Activated CD4-positive, alpha-beta memory T cell treated with anti-CD3 and anti-CD28 coated beads, Interleukin-2, amount 10 ng/mL, durations not matched to agents 7 days and 5 days (primary cell): ENCODE measurements at regions of chr14 and their contacts with region 1.

Region 1: GRCh38 chr14:63770187-63770807 is 42.4 kb upstream of the SGPP1 start:
- DNase-seq: peak; percentile 60
- H3K4me3 Mint-ChIP-seq: no peak overlapping the region
- H3K27ac Mint-ChIP-seq: no peak overlapping the region
- H3K4me1 Mint-ChIP-seq: peaks cover 8% of the 10 kb centered on the region
- H3K27me3 Mint-ChIP-seq: no peaks in the 10 kb centered on the region

Region 2: GRCh38 chr14:63632932-63633514 is 137.3 kb before region 1 on chr14:
- CTCF ChIA-PET with region 1: interaction called, 25 read pairs
- POLR2A ChIA-PET with region 1: interaction called, 3 read pairs
- DNase-seq: no peak
- H3K4me3 Mint-ChIP-seq: no peak overlapping the region
- H3K27ac Mint-ChIP-seq: no peak overlapping the region
- H3K4me1 Mint-ChIP-seq: peaks cover 24% of the 10 kb centered on the region
- H3K27me3 Mint-ChIP-seq: no peaks in the 10 kb centered on the region

Region 3: DNA sequence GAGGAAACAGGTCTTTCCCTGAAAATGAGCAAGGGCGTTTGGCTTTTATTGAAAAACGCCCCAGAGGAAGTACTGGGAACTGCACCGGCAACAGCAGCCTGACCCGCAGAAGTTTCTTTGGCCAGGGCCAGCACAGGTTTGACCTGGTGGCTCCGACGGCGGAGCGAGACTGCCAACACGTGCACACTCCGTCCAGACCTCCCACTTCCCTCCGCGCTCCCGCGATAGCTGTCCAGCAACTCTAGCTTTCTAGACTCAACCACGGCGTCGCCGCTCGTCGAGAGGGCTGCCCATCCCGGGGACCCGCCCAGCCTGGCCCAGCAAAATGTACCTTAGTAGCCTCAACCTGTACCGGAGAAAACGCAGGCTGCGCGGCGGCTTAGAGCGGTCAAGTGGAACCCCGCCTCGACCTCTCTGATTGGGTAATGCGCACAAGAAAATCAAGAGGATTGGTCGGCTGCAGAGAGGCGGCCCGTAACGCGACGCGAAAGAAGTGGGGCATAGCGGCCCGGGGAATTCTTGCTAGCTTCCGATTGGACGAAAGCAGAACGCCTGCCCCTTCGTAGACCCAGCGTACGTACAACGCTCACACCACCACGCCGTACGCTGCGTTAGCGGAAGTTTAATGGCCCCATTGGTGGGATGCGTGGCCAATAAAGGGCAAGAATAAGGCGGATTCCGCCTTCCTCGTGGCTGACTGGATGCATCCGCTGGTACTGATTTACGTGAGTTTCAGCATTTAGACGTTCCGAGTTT is 128.6 kb before region 1 on chr14 and contains the start of gene WDR89:
- CTCF ChIA-PET with region 1: interaction called, 20 read pairs
- POLR2A ChIA-PET with region 1: interaction called, 5 read pairs
- DNase-seq: peak; percentile 98
- H3K4me3 Mint-ChIP-seq: peak within 1 kb of the TSS; percentile 80
- H3K27ac Mint-ChIP-seq: peak within 1 kb of the TSS; percentile 89
- H3K4me1 Mint-ChIP-seq: peaks cover 38% of the 10 kb centered on the region
- H3K27me3 Mint-ChIP-seq: no peaks in the 10 kb centered on the region
- total RNA-seq, gene WDR89: 20.1 to 21.9 TPM

Region 4: GRCh38 chr14:63713058-63713457 is 57.2 kb before region 1 on chr14:
- CTCF ChIA-PET with region 1: interaction called, 10 read pairs
- POLR2A ChIA-PET with region 1: no interaction called
- DNase-seq: no peak
- H3K4me3 Mint-ChIP-seq: no peak overlapping the region
- H3K27ac Mint-ChIP-seq: peak overlapping the region; percentile 0
- H3K4me1 Mint-ChIP-seq: peaks cover 19% of the 10 kb centered on the region
- H3K27me3 Mint-ChIP-seq: no peaks in the 10 kb centered on the region

Region 5: DNA sequence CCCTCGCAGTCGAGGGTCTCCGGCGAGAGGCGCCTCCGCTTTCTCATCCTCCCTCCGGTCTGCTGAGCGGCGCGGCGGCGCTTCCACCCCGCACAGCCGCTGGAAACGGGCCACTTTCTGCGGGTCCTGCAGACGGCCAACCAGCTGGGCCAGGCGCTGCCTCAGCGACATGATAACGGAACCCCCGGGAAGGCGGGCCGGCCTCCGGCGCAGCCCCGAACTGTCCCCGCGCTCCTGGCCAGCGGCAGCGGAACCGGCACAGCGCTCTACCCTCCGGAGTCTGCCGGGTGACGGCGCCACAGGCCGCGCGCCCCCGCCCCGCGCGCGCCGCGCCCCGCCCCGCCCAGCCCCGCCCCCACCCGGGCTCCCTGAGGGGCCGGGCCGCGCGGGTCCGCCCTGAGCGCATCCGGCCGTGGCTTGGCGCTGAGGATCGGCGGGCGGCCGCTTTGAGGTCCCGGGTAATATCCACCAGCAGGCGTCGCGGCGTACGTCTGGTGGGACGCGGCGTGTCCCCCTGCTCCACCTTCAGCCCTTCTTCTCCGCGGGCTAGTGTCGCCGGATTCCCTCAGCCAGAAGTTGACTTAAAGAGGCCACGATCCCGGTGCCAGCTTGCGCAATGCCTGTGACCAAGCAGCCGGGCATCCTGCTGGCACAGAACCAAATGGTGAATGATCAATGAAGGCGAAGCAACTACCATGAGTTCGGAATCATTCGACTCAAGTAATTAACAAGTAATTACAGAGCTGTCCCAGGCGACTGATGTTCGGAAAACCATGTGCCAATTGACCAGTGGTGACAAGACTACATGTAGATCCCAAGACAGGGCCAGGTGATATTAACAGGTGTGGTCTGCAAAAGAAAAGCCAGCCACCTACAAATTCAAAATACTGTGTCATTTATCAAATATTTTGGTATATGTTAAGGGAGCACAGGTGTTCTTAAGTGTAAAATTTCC is 42.2 kb before region 1 on chr14 and contains the start of gene SGPP1:
- CTCF ChIA-PET with region 1: interaction called, 23 read pairs
- POLR2A ChIA-PET with region 1: interaction called, 7 read pairs
- DNase-seq: peak; percentile 88
- H3K4me3 Mint-ChIP-seq: peak within 1 kb of the TSS; percentile 99
- H3K27ac Mint-ChIP-seq: peak within 1 kb of the TSS; percentile 94
- H3K4me1 Mint-ChIP-seq: peaks cover 33% of the 10 kb centered on the region
- H3K27me3 Mint-ChIP-seq: peaks cover 10% of the 10 kb centered on the region
- total RNA-seq, gene SGPP1: 19.3 to 20.6 TPM

Region 6: DNA sequence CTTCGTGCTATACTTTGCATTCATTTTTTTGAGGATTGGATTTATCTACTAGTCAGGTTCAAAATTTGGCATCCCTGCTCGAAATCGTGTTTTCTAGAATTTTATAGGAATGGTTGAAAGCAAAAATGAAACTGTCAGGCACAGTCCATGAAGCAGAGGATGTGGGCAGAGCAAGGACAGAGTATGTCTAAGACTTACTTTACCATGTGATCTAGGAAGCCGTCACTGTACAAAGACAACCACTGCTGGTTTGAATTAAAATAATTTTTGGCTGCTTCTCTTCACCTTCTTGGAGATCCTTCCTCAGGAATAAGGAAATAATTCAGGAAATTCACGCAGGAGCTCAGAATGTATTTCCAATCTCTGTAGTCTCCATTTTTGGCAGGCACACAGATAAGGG is 10.8 kb before region 1 on chr14:
- CTCF ChIA-PET with region 1: interaction called, 12 read pairs
- POLR2A ChIA-PET with region 1: no interaction called
- DNase-seq: peak; percentile 43
- H3K4me3 Mint-ChIP-seq: peak overlapping the region; percentile 65
- H3K27ac Mint-ChIP-seq: peak overlapping the region; percentile 88
- H3K4me1 Mint-ChIP-seq: peaks cover 18% of the 10 kb centered on the region
- H3K27me3 Mint-ChIP-seq: no peaks in the 10 kb centered on the region

Region 7: DNA sequence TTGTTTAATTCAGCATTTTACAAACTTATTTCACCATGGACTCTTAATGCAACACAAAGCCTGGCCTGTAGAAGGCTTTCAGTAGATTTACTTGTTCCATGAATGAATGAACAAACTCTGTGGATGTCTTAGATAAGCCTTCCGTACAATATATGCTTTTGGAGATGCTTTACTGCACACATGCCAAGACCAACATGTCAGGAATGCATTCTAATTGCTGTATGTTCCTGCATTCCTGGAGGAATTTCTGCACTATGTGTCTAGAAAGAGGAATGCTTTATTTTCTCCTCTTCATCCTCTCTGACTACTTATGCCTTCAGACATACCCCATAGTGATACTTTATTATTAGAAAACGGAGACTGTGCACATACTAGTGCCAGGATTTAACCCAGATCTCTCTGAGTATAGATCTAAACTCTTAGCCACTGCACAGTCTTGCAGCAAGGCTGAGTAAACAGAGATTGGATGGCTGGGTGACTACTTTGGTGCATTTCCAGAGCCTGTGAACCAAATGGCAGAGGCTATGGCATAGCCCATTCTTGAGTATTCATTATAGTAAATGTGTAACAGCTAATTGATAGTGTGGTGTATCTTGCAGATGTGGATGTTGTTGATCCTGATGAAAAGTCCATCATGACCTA is 190.8 kb after region 1 on chr14:
- CTCF ChIA-PET with region 1: no interaction called
- POLR2A ChIA-PET with region 1: no interaction called
- DNase-seq: no peak
- H3K4me3 Mint-ChIP-seq: no peak overlapping the region
- H3K27ac Mint-ChIP-seq: no peak overlapping the region
- H3K4me1 Mint-ChIP-seq: no peaks in the 10 kb centered on the region
- H3K27me3 Mint-ChIP-seq: no peaks in the 10 kb centered on the region